ENCODE measurements at regions of chr9 and their contacts with region 1.

Region 1: GRCh38 chr9:14710804-14711203 is 11.7 kb downstream of the CER1 start:
- DNase-seq: no peak
- H3K4me3 ChIP-seq: no peak overlapping the region
- H3K27ac ChIP-seq: peak overlapping the region; percentile 50
- H3K4me1 ChIP-seq: peaks cover 15% of the 10 kb centered on the region
- H3K27me3 ChIP-seq: no peaks in the 10 kb centered on the region
- CTCF ChIP-seq: no peak

Region 2: GRCh38 chr9:14353222-14354056 is 357.4 kb before region 1 on chr9:
- CTCF ChIA-PET with region 1: no interaction called
- POLR2A ChIA-PET with region 1: no interaction called
- intact Hi-C with region 1: no loop called
- DNase-seq: peak; percentile 79
- H3K4me3 ChIP-seq: no peak overlapping the region
- H3K27ac ChIP-seq: no peak overlapping the region
- H3K4me1 ChIP-seq: no peaks in the 10 kb centered on the region
- H3K27me3 ChIP-seq: no peaks in the 10 kb centered on the region
- CTCF ChIP-seq: peak; percentile 80

Region 3: DNA sequence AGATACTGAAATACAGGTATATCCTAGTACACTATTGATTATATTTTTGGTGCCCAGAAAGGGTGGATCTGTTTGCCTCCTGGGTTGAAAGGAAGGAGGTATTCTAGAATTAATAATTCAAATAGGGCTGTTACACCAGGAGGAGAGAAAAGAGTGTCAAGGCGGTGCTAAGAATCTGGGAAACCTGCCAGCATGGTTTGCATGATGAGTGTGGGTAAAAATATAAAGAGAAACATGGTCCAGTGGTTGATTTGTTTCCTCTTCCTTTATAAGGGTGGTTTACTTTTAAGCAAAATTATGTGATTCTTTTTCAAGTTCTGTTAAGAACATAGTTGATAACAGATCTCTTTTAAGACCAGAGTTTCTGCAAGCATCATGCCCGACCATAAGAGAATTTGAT is 327.5 kb before region 1 on chr9:
- CTCF ChIA-PET with region 1: no interaction called
- POLR2A ChIA-PET with region 1: no interaction called
- intact Hi-C with region 1: no loop called
- DNase-seq: peak; percentile 64
- H3K4me3 ChIP-seq: no peak overlapping the region
- H3K27ac ChIP-seq: no peak overlapping the region
- H3K4me1 ChIP-seq: peaks cover 14% of the 10 kb centered on the region
- H3K27me3 ChIP-seq: no peaks in the 10 kb centered on the region
- CTCF ChIP-seq: no peak

Region 4: DNA sequence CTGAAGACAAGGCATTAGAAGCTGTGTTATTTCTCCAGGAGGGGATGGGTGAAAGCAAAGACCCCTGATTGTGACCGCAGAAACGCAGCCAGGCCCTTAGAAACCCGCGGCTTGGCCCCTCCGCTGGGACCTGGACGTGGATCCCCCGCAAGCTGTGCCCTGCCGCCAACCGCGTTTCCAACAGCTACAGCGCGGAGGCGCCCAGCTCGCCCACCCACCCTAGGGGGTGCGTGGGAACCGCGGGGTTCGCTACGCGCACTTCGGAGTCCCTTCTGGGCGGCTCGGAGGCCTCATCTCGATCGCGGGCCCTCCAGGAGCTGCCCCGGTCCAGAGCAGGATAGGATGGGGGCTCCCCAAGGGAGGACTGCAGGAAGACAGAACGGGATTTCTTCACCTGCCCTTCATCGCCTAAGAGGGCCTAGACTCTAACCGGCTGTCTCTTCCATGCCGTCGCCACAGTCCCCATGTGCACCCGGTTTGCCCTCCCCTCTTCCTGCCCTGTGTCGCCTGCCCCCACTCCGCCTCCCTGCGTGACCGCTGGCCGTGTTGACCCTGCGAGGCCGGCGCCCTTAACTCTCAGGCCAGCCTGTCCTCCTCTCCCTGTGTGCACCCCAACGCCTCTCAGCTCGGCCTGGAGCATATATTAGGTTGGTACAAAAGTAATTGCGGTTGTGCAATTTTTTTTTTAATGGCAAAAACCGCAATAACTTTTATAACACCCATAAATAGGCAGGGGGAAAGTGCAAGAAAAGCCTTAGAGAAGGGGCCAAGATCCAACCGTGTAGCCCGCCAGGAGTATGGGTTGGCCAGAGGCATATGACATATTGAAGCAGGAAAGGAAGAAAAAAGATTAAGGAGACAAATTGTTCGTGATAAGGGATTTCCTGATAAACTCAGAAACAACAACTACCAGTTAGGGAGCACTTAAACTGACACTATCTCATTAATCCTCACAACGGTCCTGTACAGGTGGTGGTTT is 267.5 kb after region 1 on chr9:
- CTCF ChIA-PET with region 1: no interaction called
- POLR2A ChIA-PET with region 1: no interaction called
- intact Hi-C with region 1: loop called (anchors 5 kb)
- DNase-seq: no peak
- H3K4me3 ChIP-seq: no peak overlapping the region
- H3K27ac ChIP-seq: peak overlapping the region; percentile 70
- H3K4me1 ChIP-seq: no peaks in the 10 kb centered on the region
- H3K27me3 ChIP-seq: no peaks in the 10 kb centered on the region
- CTCF ChIP-seq: no peak

Region 5: DNA sequence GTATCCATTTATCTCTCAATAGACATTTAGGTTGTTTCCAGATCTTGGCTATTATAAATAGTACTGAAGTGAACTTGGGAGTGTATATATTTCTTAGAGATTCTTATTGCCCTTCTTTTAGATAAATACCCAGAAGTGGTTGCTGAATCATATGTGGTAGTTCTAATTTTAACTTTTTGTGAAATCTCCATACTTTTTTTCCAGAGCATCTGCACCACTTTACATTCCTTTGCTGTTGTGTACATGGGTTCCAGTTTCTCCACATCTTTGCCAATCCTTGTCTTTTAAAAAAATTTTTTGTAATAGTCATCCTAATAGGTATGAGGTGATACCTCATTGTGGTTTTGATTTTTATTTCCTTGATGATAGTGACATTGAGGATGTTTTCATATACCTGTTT is 1145.8 kb after region 1 on chr9:
- CTCF ChIA-PET with region 1: no interaction called
- POLR2A ChIA-PET with region 1: no interaction called
- intact Hi-C with region 1: loop called (anchors 10 kb)
- DNase-seq: no peak
- H3K4me3 ChIP-seq: peak overlapping the region; percentile 45
- H3K27ac ChIP-seq: peak overlapping the region; percentile 88
- H3K4me1 ChIP-seq: peaks cover 11% of the 10 kb centered on the region
- H3K27me3 ChIP-seq: no peaks in the 10 kb centered on the region
- CTCF ChIP-seq: no peak